ENCODE measurements at regions of chr7 and their contacts with region 1.

Region 1: DNA sequence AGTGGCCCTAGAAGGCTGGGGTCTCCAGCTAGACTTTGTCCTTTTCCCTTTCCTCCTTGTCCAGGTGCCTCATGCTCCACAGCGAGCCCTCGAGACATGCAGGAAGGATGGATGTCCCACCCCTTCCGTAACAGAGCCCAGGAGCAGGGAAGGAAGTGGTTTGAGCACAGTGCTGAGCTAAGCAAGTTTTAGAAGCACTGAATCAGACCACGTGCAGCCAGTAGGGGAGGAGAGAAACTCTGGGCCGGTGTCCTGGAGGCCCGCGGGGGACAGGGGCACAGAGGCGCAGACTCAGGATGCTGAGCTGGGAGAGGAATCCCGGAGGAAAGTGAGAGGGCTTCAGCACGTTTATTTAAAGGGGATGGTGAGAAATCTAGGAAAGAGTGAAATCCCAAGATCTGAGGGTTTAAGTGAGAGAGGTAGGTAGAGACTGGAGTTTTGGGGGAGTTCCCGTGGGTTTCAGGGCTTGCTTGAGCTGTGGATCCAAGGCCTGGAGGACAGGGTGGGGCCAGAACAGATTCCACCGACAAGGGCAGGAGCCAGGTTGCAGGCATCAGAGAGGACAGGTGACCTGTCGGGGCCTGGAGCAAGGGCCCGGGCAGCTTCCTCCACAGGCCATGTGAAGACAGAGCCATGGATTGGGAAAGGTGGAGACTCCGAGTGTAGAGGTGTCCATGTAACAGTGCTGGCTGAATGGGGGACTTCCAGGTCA is 4.4 kb upstream of the IRF5 start:
- DNase-seq: peak; percentile 64
- ATAC-seq: peak; percentile 37
- H3K4me3 ChIP-seq: peak overlapping the region in 3 of 5 experiments; percentile 29 to 42 (median 40)
- H3K4me3 Mint-ChIP-seq: peak overlapping the region; percentile 85
- H3K27ac ChIP-seq: peak overlapping the region in 1 of 2 donors; percentile 50
- H3K27ac Mint-ChIP-seq: peak overlapping the region; percentile 88
- H3K4me1 ChIP-seq: peaks cover 36 to 43% of the 10 kb centered on the region in 2 donors
- H3K4me1 Mint-ChIP-seq: peaks cover 42% of the 10 kb centered on the region
- H3K27me3 ChIP-seq: no peaks in the 10 kb centered on the region
- H3K27me3 Mint-ChIP-seq: no peaks in the 10 kb centered on the region
- CTCF ChIP-seq: no peak

Region 2: DNA sequence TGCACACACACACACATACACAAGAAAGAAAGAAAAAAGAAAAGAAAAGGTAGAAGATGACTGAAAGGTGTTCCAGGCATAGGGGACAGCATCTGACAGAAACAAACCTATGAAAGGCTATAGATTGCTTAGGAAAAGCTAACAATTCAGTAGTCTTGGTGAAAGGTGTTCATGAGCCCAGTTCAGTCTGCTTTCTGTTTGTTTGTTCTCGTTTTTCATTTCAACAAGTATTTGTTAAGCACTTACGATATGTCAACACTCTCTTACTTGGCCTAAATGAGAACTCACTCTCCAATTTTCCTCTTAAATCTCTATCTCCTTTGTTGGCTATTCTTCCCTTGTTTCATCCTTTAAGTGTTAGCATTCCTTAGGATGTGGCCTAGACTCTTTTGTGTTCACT is 1813.8 kb before region 1 on chr7:
- CTCF ChIA-PET with region 1: no interaction called
- POLR2A ChIA-PET with region 1: no interaction called
- intact Hi-C with region 1: no loop called
- DNase-seq: no peak
- ATAC-seq: no peak
- H3K4me3 ChIP-seq: no peak overlapping the region
- H3K4me3 Mint-ChIP-seq: no peak overlapping the region
- H3K27ac ChIP-seq: no peak overlapping the region
- H3K27ac Mint-ChIP-seq: no peak overlapping the region
- H3K4me1 ChIP-seq: no peaks in the 10 kb centered on the region
- H3K4me1 Mint-ChIP-seq: no peaks in the 10 kb centered on the region
- H3K27me3 ChIP-seq: no peaks in the 10 kb centered on the region
- H3K27me3 Mint-ChIP-seq: no peaks in the 10 kb centered on the region
- CTCF ChIP-seq: no peak

Region 3: GRCh38 chr7:128000854-128001265 is 932.5 kb before region 1 on chr7:
- CTCF ChIA-PET with region 1: no interaction called
- POLR2A ChIA-PET with region 1: no interaction called
- intact Hi-C with region 1: no loop called
- DNase-seq: no peak
- ATAC-seq: no peak
- H3K4me3 ChIP-seq: no peak overlapping the region
- H3K4me3 Mint-ChIP-seq: no peak overlapping the region
- H3K27ac ChIP-seq: no peak overlapping the region
- H3K27ac Mint-ChIP-seq: peak overlapping the region; percentile 59
- H3K4me1 ChIP-seq: peaks cover 38 to 45% of the 10 kb centered on the region in 2 donors
- H3K4me1 Mint-ChIP-seq: peaks cover 62% of the 10 kb centered on the region
- H3K27me3 ChIP-seq: no peaks in the 10 kb centered on the region
- H3K27me3 Mint-ChIP-seq: no peaks in the 10 kb centered on the region
- CTCF ChIP-seq: no peak

Region 4: GRCh38 chr7:128890306-128891109 is 42.8 kb before region 1 on chr7:
- CTCF ChIA-PET with region 1: no interaction called
- POLR2A ChIA-PET with region 1: no interaction called
- intact Hi-C with region 1: no loop called
- DNase-seq: peak; percentile 45
- ATAC-seq: peak; percentile 39
- H3K4me3 ChIP-seq: peak overlapping the region in 3 of 5 experiments; percentile 41 to 53 (median 41)
- H3K4me3 Mint-ChIP-seq: peak overlapping the region; percentile 46
- H3K27ac ChIP-seq: no peak overlapping the region
- H3K27ac Mint-ChIP-seq: no peak overlapping the region
- H3K4me1 ChIP-seq: peaks cover 7 to 12% of the 10 kb centered on the region in 2 donors
- H3K4me1 Mint-ChIP-seq: peaks cover 4% of the 10 kb centered on the region
- H3K27me3 ChIP-seq: peaks cover 0 to 41% (median 6%) of the 10 kb centered on the region in 4 experiments
- H3K27me3 Mint-ChIP-seq: peaks cover 13% of the 10 kb centered on the region
- CTCF ChIP-seq: no peak

Region 5: GRCh38 chr7:128946923-128947830 is 13.8 kb after region 1 on chr7:
- CTCF ChIA-PET with region 1: interaction called, 10 read pairs
- POLR2A ChIA-PET with region 1: interaction called, 7 read pairs
- intact Hi-C with region 1: no loop called
- DNase-seq: no peak
- ATAC-seq: no peak
- H3K4me3 ChIP-seq: no peak overlapping the region
- H3K4me3 Mint-ChIP-seq: no peak overlapping the region
- H3K27ac ChIP-seq: no peak overlapping the region
- H3K27ac Mint-ChIP-seq: peak overlapping the region; percentile 20
- H3K4me1 ChIP-seq: peaks cover 0 to 7% of the 10 kb centered on the region in 2 donors
- H3K4me1 Mint-ChIP-seq: peaks cover 24% of the 10 kb centered on the region
- H3K27me3 ChIP-seq: no peaks in the 10 kb centered on the region
- H3K27me3 Mint-ChIP-seq: no peaks in the 10 kb centered on the region
- CTCF ChIP-seq: no peak

Region 6: DNA sequence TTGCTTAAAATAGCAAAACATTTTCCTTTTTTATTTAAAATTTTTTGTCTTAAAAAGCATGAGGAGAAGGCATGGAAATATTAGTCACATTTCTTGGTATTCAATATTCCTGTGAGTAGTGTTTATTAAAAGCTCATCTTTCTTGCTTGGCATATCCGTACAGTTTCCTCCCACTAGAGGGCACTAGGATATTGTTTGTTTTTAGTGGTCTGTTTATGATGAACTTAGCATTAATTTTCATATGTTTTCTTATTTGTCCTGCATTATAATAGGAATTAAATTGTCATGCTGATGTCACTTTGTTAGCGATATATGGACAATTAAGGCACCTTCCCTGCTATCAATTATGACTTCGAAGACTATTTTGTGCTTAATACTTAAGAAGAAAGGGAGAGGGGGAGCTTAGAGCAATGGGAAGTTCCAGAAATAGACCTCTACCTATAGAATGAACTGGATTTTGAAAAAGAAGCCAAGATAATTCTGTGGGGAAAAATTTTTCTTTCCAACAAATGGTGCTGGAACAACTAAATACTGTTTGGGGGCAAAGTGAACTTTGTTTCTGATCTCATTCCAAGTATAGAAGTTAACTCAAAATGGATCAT is 409.9 kb after region 1 on chr7:
- CTCF ChIA-PET with region 1: no interaction called
- POLR2A ChIA-PET with region 1: no interaction called
- intact Hi-C with region 1: no loop called
- DNase-seq: peak; percentile 58
- ATAC-seq: no peak
- H3K4me3 ChIP-seq: no peak overlapping the region
- H3K4me3 Mint-ChIP-seq: no peak overlapping the region
- H3K27ac ChIP-seq: no peak overlapping the region
- H3K27ac Mint-ChIP-seq: no peak overlapping the region
- H3K4me1 ChIP-seq: no peaks in the 10 kb centered on the region
- H3K4me1 Mint-ChIP-seq: peaks cover 4% of the 10 kb centered on the region
- H3K27me3 ChIP-seq: no peaks in the 10 kb centered on the region
- H3K27me3 Mint-ChIP-seq: no peaks in the 10 kb centered on the region
- CTCF ChIP-seq: peak; percentile 90